A549 (cell line): ENCODE measurements at regions of chr14 and their contacts with region 1.

Region 1: DNA sequence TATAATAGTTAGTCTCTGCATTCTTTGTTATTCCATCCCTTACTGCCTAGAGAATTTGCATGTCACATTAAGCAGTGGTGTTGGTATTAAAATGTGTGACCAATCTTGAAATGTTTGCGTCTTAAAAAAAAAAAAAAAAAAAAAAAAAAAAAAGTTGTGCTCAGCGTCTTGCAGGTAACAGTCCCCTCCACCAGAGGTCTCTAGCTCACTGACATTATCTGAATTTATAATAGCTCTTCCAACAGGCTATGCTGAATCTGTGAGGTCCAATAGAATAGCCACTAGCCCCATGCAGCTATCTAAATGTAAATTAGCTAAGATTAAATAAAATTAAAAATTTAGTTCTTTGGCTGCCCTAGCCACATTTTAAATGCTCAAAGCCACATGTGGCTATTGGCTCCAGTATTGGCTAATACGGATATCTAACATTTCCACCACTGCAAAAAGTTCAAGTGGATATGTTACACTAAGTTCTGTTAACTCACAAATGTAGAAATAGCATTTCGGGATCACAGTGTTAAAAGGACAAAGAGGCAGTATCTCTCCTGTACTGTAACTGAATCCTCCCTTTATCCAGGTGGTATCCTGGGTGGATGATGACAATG is 28.7 kb downstream of the NKX2-8 start:
- DNase-seq: peak; percentile 29 to 64
- ATAC-seq: peak; percentile 68 to 86; a peak in 4 of 6 replicates
- H3K4me3 ChIP-seq: no peak overlapping the region
- H3K27ac ChIP-seq: no peak overlapping the region
- H3K4me1 ChIP-seq: no peaks in the 10 kb centered on the region
- CTCF ChIP-seq: peak; percentile 81
- EP300 ChIP-seq: no peak
- POLR2A ChIP-seq: no peak
- RAD21 ChIP-seq: peak; percentile 63 to 65

Region 2: GRCh38 chr14:35835208-35835982 is 718.4 kb before region 1 on chr14:
- CTCF ChIA-PET with region 1: no interaction called
- POLR2A ChIA-PET with region 1: no interaction called
- DNase-seq: no peak
- ATAC-seq: no peak
- H3K4me3 ChIP-seq: no peak overlapping the region
- H3K27ac ChIP-seq: no peak overlapping the region
- H3K4me1 ChIP-seq: no peaks in the 10 kb centered on the region
- CTCF ChIP-seq: no peak
- EP300 ChIP-seq: no peak
- POLR2A ChIP-seq: no peak
- RAD21 ChIP-seq: no peak

Region 3: DNA sequence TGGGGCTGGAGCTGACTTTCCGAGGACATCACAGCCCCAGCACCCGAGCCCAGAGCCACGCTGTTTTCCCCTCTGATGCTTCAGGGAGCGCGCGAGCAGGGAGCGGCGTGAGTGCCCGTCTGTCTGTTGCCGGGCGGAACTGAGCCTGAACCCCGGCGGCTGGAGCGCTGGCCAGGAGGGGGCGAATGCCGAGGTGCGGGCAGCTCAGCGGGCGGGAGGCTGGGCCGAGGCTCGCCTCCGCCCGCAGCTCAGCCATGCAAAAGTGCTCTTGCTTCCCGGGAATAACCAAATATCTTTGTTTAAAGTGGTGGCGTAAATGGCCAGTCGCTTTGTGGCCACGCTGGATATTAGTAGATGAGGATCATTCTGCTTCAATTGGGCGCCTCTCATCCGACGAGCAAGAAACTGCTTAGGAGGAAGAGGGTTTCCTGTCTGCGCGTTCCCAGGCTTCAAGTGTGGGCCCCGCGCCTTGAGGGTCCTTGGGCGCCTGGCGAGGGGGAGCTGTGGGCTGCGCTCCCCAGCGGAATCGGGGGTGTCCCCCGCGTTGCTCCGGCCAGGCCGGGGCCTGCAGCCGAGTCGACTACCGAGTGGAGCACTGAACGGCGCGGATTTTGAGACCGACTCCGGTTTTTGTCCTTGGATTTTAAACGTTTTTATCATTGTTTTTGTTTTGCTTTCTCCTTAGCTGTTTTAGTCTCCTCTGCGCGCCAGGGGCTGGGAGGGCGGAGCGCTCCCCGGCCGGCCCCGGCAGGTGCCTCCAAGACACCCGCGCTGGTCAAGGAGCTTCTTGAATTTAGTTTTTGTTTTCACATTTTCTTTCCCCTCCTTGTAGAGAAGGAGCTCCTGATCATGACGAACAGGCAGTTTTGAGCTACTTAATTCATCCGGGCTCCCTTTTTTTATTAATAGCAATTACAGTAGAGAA is 32.9 kb before region 1 on chr14:
- CTCF ChIA-PET with region 1: interaction called, 40 read pairs
- POLR2A ChIA-PET with region 1: no interaction called
- DNase-seq: peak; percentile 57 to 64
- ATAC-seq: peak; percentile 73 to 83
- H3K4me3 ChIP-seq: peak overlapping the region; percentile 54
- H3K27ac ChIP-seq: no peak overlapping the region
- H3K4me1 ChIP-seq: peaks cover 9% of the 10 kb centered on the region; the same call in 2 of the 3 replicates
- CTCF ChIP-seq: peak; percentile 29
- EP300 ChIP-seq: no peak
- POLR2A ChIP-seq: no peak
- RAD21 ChIP-seq: no peak

Region 4: GRCh38 chr14:36538051-36538450 is 15.7 kb before region 1 on chr14:
- CTCF ChIA-PET with region 1: interaction called, 31 read pairs
- POLR2A ChIA-PET with region 1: no interaction called
- DNase-seq: no peak
- ATAC-seq: no peak
- H3K4me3 ChIP-seq: no peak overlapping the region
- H3K27ac ChIP-seq: no peak overlapping the region
- H3K4me1 ChIP-seq: no peaks in the 10 kb centered on the region
- CTCF ChIP-seq: no peak
- EP300 ChIP-seq: no peak
- POLR2A ChIP-seq: no peak
- RAD21 ChIP-seq: no peak

Region 5: DNA sequence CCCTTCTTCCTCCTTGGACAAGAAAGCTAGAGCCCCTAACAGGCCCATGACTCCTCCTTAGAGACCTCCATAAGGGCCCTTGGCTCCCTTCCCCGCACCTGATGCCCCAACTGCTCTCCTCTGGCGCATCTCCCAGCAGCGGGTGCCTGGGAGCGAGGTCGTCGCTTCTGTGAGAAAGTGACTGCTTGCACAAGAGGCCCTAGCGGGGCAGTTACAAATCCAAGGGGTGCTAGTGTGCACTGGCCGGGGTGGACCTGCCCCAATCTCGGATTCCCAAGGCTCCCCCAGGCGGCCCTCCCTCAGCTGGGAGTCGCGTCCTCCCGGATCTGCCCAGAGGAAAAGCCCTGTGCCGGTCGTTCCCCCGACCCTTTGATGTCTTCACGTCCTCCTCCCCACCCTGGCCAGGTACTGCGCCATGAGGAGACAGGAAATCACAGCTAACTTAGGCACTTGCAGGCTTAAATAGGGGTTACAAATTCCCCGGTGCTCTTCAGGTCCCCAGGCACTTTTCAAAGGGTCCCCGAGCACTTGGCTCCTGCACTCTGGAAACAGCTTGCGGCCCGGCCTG is 25.9 kb after region 1 on chr14:
- CTCF ChIA-PET with region 1: interaction called, 24 read pairs
- POLR2A ChIA-PET with region 1: no interaction called
- DNase-seq: no peak
- ATAC-seq: no peak
- H3K4me3 ChIP-seq: no peak overlapping the region
- H3K27ac ChIP-seq: no peak overlapping the region
- H3K4me1 ChIP-seq: no peaks in the 10 kb centered on the region
- CTCF ChIP-seq: no peak
- EP300 ChIP-seq: no peak
- POLR2A ChIP-seq: no peak
- RAD21 ChIP-seq: no peak

Region 6: GRCh38 chr14:36591482-36591881 is 37.7 kb after region 1 on chr14:
- CTCF ChIA-PET with region 1: interaction called, 12 read pairs
- POLR2A ChIA-PET with region 1: no interaction called
- DNase-seq: no peak
- ATAC-seq: no peak
- H3K4me3 ChIP-seq: no peak overlapping the region
- H3K27ac ChIP-seq: no peak overlapping the region
- H3K4me1 ChIP-seq: no peaks in the 10 kb centered on the region
- CTCF ChIP-seq: no peak
- EP300 ChIP-seq: no peak
- POLR2A ChIP-seq: no peak
- RAD21 ChIP-seq: no peak

Region 7: GRCh38 chr14:36604757-36605505 is 51.2 kb after region 1 on chr14:
- CTCF ChIA-PET with region 1: interaction called, 112 read pairs
- POLR2A ChIA-PET with region 1: interaction called, 4 read pairs
- DNase-seq: peak; percentile 71 to 80
- ATAC-seq: peak; percentile 80 to 91
- H3K4me3 ChIP-seq: no peak overlapping the region
- H3K27ac ChIP-seq: no peak overlapping the region
- H3K4me1 ChIP-seq: 0 out of 3 replicates have a peak, but pooled peaks cover 3% of the 10 kb centered on the region
- CTCF ChIP-seq: peak; percentile 82
- EP300 ChIP-seq: no peak
- POLR2A ChIP-seq: no peak
- RAD21 ChIP-seq: peak; percentile 83 to 85

Region 8: DNA sequence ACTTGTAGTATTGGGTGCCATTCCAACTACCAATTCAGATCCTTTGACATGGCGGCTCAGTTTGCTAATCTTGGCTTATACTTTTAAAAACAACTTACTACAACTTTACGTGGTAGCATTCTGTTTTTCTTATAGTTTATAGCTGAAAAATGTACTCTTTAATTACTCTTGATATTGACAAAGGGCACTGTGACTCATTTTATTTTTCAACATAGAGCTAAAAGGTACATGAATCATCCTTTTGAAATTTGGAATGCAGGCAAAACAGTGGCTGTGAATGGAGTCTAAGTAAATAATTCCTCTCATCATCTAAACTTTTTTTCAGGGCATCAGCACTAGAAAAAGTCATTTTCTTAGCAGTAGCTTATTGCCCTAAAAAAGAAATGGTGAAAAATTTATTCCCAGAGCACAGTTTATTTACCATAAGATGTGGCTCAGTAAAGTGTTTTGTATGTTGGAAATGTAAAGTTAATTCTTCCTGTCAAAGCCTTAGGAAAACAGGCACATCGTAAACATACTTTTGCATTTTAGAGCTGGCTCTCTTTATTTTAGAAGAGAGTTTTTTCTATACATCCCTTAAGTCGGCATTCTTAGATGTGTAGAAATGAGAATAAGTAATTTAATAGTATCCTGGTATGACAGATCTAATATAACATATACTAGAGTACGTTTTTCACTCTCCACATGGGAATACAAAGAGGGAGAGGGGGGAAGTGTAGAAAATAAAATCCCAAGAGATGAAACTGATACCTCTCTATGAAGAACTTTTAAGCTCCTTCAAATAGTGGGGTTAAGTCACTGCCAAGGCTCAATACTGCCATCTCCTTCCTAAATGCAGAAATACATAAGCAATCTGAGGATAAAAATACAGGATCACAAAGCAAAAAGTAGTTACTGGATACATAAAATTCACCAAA is 563.4 kb after region 1 on chr14:
- CTCF ChIA-PET with region 1: interaction called, 11 read pairs
- POLR2A ChIA-PET with region 1: no interaction called
- DNase-seq: peak; percentile 40 to 74
- ATAC-seq: peak; percentile 71 to 84
- H3K4me3 ChIP-seq: no peak overlapping the region; the same call in 2 of the 3 replicates
- H3K27ac ChIP-seq: peak overlapping the region; percentile 20 to 42; a peak in 1 of 6 replicates
- H3K4me1 ChIP-seq: peaks cover 21% of the 10 kb centered on the region; the same call in 2 of the 3 replicates
- CTCF ChIP-seq: peak; percentile 65
- EP300 ChIP-seq: no peak
- POLR2A ChIP-seq: no peak
- RAD21 ChIP-seq: peak; percentile 76 to 81